Panc1 (cell line): ENCODE measurements at regions of chr10 and their contacts with region 1.

Region 1: DNA sequence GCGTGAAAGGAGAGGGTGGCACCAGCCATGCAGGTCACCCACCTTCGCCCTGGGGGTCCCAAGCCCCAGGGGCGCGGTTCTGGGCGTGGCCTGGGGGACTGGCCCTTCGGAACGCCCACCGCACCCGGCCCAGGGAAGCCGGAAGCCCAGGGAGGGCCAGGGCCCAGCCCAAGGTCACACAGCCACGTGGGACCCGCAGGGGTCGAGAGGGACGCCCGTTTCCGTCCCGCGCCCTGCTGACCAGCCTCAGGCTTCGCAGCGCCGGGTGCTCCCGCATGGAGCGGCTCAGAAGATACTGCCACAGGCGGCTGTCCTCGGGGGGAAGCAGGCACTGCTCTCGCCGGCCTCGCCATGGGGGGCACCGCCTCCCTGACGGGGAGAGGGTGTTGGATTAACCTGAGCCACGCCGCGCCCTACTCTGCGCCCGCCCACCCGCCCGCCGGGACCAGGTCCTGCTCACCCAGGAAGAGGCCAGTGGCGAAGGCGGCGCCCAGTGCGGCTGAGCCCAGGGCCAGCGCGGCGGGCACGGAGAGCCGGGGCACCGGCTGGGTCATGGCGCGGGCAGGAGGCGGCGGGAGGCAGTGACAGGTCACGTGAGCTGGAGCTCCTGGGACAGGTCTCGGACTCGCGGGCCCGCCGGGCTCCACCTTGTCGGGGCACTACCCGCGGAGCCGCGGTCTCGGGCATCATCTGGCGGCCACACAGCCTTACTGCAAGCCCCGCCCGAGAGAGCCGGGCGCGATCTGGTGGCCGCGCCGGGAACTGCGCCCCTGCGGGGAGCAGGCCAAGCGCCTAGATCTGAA is at the start of gene COMTD1:
- DNase-seq: peak; percentile 73
- ATAC-seq: peak; percentile 77
- H3K4me3 ChIP-seq: peak within 1 kb of the TSS; percentile 60 to 78
- H3K27ac ChIP-seq: peak within 1 kb of the TSS; percentile 80
- H3K4me1 ChIP-seq: peaks cover 24% of the 10 kb centered on the region
- H3K27me3 ChIP-seq: no peaks in the 10 kb centered on the region
- CTCF ChIP-seq: peak; percentile 100
- total RNA-seq, gene COMTD1: 32.8 TPM

Region 2: DNA sequence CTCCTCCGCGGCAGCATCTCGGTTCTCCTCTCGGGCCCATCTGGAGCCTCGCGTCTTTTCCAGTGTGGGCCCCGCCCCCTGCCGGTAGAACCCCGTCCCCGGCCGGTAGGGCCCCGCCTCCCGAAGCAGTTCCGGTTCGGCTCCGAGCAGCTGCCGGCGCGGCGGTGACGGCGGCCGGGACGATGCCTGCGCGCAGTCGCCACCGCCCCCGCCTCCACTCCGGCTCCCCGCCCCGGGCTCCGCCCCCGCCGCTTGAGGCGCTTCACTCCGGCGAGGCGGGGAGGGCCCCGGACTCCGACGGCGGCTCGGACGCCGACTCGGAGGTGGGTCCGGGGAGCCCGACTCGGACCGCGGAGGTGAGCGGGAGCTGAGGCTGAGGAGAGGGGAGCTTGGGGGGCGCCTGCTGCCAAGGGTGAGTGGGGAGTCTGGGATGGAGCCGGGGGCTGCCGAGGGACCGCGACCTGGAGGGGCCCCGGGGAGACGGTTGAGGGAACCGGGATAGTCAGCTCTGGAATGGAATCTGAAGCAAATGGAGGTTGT is 124.1 kb before region 1 on chr10 and contains the start of gene SAMD8:
- CTCF ChIA-PET with region 1: interaction called, 3 read pairs
- POLR2A ChIA-PET with region 1: interaction called, 5 read pairs
- in situ Hi-C with region 1: no loop called
- intact Hi-C with region 1: loop called (anchors 5 kb)
- DNase-seq: peak; percentile 79
- ATAC-seq: peak; percentile 92
- H3K4me3 ChIP-seq: peak within 1 kb of the TSS; percentile 86 to 97
- H3K27ac ChIP-seq: peak within 1 kb of the TSS; percentile 92
- H3K4me1 ChIP-seq: peaks cover 15% of the 10 kb centered on the region
- H3K27me3 ChIP-seq: no peaks in the 10 kb centered on the region
- CTCF ChIP-seq: no peak
- total RNA-seq, gene SAMD8: 32.0 TPM

Region 3: DNA sequence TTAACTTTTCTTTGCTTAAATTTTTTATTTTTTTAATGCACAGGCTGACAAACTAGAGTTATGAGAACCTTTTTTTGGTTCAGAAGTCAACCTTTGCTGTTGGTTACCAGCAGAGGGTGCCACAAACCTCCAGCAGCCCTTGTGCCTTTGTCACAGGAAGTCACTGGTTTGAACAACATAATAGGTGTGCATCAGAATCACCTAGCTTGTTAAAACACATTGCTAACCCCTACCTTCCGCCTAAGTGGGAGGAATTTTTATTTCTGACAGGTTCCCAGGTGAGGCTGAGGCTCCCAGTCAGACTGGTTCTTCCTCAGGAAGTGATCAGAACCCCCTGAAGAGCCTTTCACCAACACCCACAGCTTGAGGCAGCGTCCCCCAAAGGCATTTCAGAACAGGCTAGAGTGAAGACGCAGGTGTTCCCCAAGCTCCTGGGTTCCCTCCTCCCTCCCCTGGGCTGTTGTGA is 47.6 kb before region 1 on chr10:
- CTCF ChIA-PET with region 1: interaction called, 12 read pairs
- POLR2A ChIA-PET with region 1: no interaction called
- in situ Hi-C with region 1: no loop called
- intact Hi-C with region 1: loop called (anchors 2 kb)
- DNase-seq: no peak
- ATAC-seq: peak; percentile 84
- H3K4me3 ChIP-seq: no peak overlapping the region
- H3K27ac ChIP-seq: no peak overlapping the region
- H3K4me1 ChIP-seq: peaks cover 9% of the 10 kb centered on the region
- H3K27me3 ChIP-seq: no peaks in the 10 kb centered on the region
- CTCF ChIP-seq: peak; percentile 94

Region 4: GRCh38 chr10:75253281-75254220 is 18.0 kb after region 1 on chr10:
- CTCF ChIA-PET with region 1: no interaction called
- POLR2A ChIA-PET with region 1: no interaction called
- in situ Hi-C with region 1: no loop called
- intact Hi-C with region 1: no loop called
- DNase-seq: no peak
- ATAC-seq: no peak
- H3K4me3 ChIP-seq: no peak overlapping the region
- H3K27ac ChIP-seq: no peak overlapping the region
- H3K4me1 ChIP-seq: no peaks in the 10 kb centered on the region
- H3K27me3 ChIP-seq: no peaks in the 10 kb centered on the region
- CTCF ChIP-seq: no peak